Adrenal gland (tissue), 19 donors: ENCODE measurements at regions of chr15 and their contacts with region 1.

Region 1: DNA sequence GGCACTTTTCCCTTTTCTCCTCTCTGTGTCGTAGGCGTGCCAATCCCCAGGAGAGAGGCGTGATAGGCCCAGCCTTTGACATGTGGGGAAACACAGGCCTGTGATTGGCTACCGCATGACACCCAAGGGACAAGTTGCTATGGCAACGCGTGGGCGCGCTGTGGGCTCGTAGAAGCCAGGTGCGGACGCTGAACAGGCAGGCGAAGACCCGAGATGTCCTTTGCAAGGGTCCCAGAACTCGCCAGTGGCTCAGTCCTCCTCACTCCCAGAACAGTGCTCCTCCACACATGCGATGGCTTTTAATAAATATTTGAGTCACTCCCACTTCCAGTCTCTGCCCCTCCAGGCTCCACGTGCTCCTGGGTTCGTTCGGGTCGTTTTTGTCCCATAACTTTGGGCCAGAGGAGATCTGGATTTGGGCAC is 4.2 kb downstream of the SLC51B start:
- DNase-seq: peak; percentile 87 to 98 (median 94)
- H3K4me3 ChIP-seq: peak overlapping the region in 1 of 4 donors; percentile 34
- H3K27ac ChIP-seq: no peak overlapping the region
- H3K4me1 ChIP-seq: peaks cover 0 to 17% of the 10 kb centered on the region in 2 donors
- H3K27me3 ChIP-seq: no peaks in the 10 kb centered on the region
- CTCF ChIP-seq: no peak
- POLR2A ChIP-seq: no peak

Region 2: DNA sequence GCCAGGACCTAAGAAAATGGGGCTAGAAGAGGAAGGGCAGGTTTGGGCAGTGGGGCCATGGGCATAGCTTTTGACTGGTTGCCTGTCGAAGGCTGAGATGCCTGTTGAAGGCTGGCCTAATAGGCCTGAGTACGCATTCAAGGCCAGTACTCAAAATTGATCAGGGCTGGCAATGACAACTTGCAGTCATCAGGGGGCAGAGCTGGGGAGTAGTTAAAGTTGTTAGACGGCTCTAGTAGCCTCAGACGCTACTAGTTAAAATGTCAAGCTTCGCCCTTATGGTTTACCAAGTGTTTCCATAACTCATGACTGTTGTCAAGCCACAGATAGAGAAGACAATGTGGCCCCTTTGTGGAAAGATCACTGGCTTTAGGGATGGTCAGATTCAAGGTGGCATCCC is 88.4 kb before region 1 on chr15:
- intact Hi-C with region 1: no loop called
- DNase-seq: no peak
- H3K4me3 ChIP-seq: no peak overlapping the region
- H3K27ac ChIP-seq: no peak overlapping the region
- H3K4me1 ChIP-seq: no peaks in the 10 kb centered on the region
- H3K27me3 ChIP-seq: no peaks in the 10 kb centered on the region
- CTCF ChIP-seq: no peak
- POLR2A ChIP-seq: no peak

Region 3: GRCh38 chr15:65094294-65094995 is 45.0 kb after region 1 on chr15:
- intact Hi-C with region 1: loop called in 1 of 2 experiments (anchors 10 kb)
- DNase-seq: peak in 4 of 7 donors; percentile 45 to 87 (median 61)
- H3K4me3 ChIP-seq: no peak overlapping the region
- H3K27ac ChIP-seq: no peak overlapping the region
- H3K4me1 ChIP-seq: peaks cover 0 to 11% of the 10 kb centered on the region in 2 donors
- H3K27me3 ChIP-seq: no peaks in the 10 kb centered on the region
- CTCF ChIP-seq: no peak
- POLR2A ChIP-seq: no peak